Caco-2 (cell line): ENCODE measurements at regions of chr7 and their contacts with region 1.

Region 1: GRCh38 chr7:99918959-99919813 is at the start of gene TRIM4:
- DNase-seq: peak; percentile 90 to 91
- H3K4me3 ChIP-seq: peak within 1 kb of the TSS; percentile 89
- H3K4me3 Mint-ChIP-seq: peak within 1 kb of the TSS; percentile 97
- H3K27ac Mint-ChIP-seq: peak within 1 kb of the TSS; percentile 97
- H3K4me1 ChIP-seq: peaks cover 13% of the 10 kb centered on the region; the same call in 1 of the 2 replicates
- H3K4me1 Mint-ChIP-seq: peaks cover 11% of the 10 kb centered on the region
- H3K27me3 ChIP-seq: no peaks in the 10 kb centered on the region
- H3K27me3 Mint-ChIP-seq: no peaks in the 10 kb centered on the region
- CTCF ChIP-seq: peak in 1 of 2 experiments; percentile 42
- total RNA-seq, gene TRIM4: 22.5 and 25.6 TPM in 2 replicates

Region 2: DNA sequence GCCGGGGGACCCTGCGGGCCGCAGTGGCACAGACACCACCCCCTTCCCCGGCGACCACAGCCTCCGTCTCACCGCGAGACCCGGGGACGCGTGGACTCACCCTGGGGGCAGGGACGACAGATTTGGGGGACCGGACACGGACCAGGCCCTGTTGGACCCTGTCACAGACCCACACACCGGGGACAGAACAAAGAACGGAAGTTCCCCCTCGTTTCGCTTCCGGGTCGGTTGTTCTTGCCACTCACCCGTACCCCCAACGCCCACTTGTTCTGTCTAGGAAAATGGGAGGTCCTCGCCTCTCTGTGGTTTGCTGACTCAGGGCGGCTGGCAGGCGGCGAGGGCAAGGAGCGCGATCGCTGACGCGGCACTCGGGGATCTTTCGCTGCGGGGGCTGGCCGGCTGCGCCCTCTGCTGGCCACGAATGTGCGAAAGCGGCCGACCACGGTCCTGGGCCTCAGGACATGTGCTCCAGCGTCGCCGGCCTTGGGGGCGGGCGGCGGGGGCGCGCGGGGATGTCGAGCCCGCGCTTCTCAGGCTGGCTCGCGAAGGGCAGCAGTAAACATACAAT is 162.4 kb after region 1 on chr7 and contains the start of gene ZNF3:
- CTCF ChIA-PET with region 1: interaction called, 4 read pairs
- POLR2A ChIA-PET with region 1: no interaction called
- intact Hi-C with region 1: loop called (anchors 2 kb)
- DNase-seq: peak; percentile 99
- H3K4me3 ChIP-seq: peak within 1 kb of the TSS; percentile 74
- H3K4me3 Mint-ChIP-seq: peak within 1 kb of the TSS; percentile 83
- H3K27ac Mint-ChIP-seq: peak within 1 kb of the TSS; percentile 46
- H3K4me1 ChIP-seq: peaks cover 24% of the 10 kb centered on the region
- H3K4me1 Mint-ChIP-seq: peaks cover 14% of the 10 kb centered on the region
- H3K27me3 ChIP-seq: no peaks in the 10 kb centered on the region
- H3K27me3 Mint-ChIP-seq: no peaks in the 10 kb centered on the region
- CTCF ChIP-seq: peak; percentile 89 to 91
- total RNA-seq, gene ZNF3: 37.8 and 41.1 TPM in 2 replicates